Activated CD4-positive, alpha-beta memory T cell treated with anti-CD3 and anti-CD28 coated beads for 36 hours (primary cell): ENCODE measurements at regions of chr1 and their contacts with region 1.

Region 1: GRCh38 chr1:224356685-224357625 is at the start of gene CNIH4:
- DNase-seq: peak; percentile 94
- H3K4me3 Mint-ChIP-seq: peak within 1 kb of the TSS; percentile 90
- H3K27ac Mint-ChIP-seq: peak within 1 kb of the TSS; percentile 88
- H3K4me1 Mint-ChIP-seq: peaks cover 27% of the 10 kb centered on the region
- H3K27me3 Mint-ChIP-seq: no peaks in the 10 kb centered on the region
- total RNA-seq, gene CNIH4: 48.3 to 51.6 TPM

Region 2: GRCh38 chr1:224095867-224096266 is 261.1 kb before region 1 on chr1:
- CTCF ChIA-PET with region 1: no interaction called
- POLR2A ChIA-PET with region 1: no interaction called
- intact Hi-C with region 1: no loop called
- DNase-seq: no peak
- H3K4me3 Mint-ChIP-seq: no peak overlapping the region
- H3K27ac Mint-ChIP-seq: no peak overlapping the region
- H3K4me1 Mint-ChIP-seq: no peaks in the 10 kb centered on the region
- H3K27me3 Mint-ChIP-seq: peaks cover 9% of the 10 kb centered on the region

Region 3: GRCh38 chr1:224368409-224368808 is 11.5 kb after region 1 on chr1:
- CTCF ChIA-PET with region 1: interaction called, 6 read pairs
- POLR2A ChIA-PET with region 1: interaction called, 5 read pairs
- intact Hi-C with region 1: loop called (anchors 1 kb)
- DNase-seq: no peak
- H3K4me3 Mint-ChIP-seq: no peak overlapping the region
- H3K27ac Mint-ChIP-seq: peak overlapping the region; percentile 56
- H3K4me1 Mint-ChIP-seq: peaks cover 58% of the 10 kb centered on the region
- H3K27me3 Mint-ChIP-seq: no peaks in the 10 kb centered on the region

Region 4: GRCh38 chr1:224377676-224378006 is 20.7 kb after region 1 on chr1:
- CTCF ChIA-PET with region 1: interaction called, 6 read pairs
- POLR2A ChIA-PET with region 1: interaction called, 4 read pairs
- intact Hi-C with region 1: loop called (anchors 1 kb)
- DNase-seq: peak; percentile 67
- H3K4me3 Mint-ChIP-seq: no peak overlapping the region
- H3K27ac Mint-ChIP-seq: peak overlapping the region; percentile 46
- H3K4me1 Mint-ChIP-seq: peaks cover 91% of the 10 kb centered on the region
- H3K27me3 Mint-ChIP-seq: no peaks in the 10 kb centered on the region

Region 5: DNA sequence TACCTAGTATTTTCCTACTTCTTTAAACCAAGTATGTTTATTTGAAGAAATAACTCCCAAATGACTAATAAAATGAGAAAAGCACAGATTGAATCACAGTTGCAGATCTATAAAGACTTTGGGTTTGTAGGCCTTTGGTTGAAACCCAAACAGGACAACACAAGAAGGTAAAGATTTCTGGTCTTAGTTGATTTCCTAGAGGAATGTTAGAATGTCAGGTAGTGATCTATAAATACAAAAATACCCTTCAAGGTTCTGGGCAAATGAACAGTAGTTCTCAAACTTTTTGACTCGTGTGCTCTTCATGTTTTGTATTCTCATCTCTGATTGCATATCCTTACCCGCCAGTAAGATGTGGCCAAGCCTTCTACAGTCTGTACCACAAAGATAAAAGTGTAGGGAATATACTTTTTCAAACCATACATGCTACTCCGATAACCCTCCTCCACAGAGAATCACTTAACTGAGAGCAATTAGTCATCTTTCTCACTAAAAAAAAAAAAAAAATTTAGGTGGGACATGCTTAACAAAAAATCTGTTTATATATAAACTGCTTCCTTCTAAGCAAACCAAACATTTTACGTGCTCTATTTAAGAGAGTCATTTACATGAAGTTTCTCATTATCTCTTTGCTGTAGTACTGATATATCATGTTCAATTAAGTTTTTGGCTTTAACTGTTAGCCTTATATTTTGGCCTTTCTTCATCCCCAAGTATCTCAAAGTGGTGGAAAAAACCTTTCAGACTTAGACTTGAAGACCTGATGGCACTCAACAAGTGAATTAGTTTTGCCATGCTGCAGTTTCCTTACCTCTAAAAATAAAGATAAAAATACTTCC is 35.7 kb after region 1 on chr1:
- CTCF ChIA-PET with region 1: interaction called, 3 read pairs
- POLR2A ChIA-PET with region 1: no interaction called
- intact Hi-C with region 1: loop called (anchors 5 kb)
- DNase-seq: no peak
- H3K4me3 Mint-ChIP-seq: no peak overlapping the region
- H3K27ac Mint-ChIP-seq: peak overlapping the region; percentile 74
- H3K4me1 Mint-ChIP-seq: peaks cover 25% of the 10 kb centered on the region
- H3K27me3 Mint-ChIP-seq: no peaks in the 10 kb centered on the region